ENCODE measurements at regions of chr1 and their contacts with region 1.

Region 1: DNA sequence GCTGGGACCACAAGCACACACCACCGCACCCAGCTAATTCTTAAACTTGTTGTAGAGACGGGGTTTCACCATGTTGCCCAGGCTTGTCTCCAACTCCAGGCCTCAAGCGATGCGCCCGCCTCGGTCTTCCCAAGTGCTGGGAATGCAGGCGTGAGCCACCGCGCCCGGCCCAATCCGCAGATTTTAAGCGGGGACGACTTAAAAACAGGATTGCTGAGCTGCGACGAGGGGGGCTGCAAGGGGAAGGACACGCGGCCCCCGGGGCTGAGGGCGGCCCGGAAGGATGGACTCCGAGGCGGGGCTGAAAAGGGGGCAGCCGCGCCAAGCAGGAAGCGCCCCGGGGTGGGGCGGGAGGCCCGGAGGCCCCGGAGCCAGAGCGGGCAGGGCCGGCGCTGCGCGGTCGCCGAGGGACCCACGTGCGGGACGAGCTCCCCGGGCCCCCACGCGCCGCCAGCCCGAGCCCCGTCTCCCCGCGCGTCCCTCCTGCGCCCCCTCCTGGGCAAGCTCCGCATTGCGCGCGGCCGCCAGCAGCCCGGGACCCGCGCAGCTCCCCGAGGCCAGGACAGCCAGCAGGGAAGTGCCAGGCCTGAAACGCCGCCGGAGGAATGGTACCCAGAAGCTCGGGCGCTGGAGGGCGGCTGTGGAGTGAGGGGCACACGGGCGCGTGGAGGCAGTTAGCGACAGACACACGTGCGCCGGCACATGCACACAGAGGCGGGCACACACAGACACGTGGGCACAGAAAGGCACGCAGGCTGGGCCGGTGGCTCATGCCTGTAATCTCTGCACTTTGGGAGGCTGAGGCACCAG is 5.5 kb upstream of the PRKCZ start:
- DNase-seq: peak; percentile 85
- CTCF ChIP-seq: peak; percentile 91

Region 2: DNA sequence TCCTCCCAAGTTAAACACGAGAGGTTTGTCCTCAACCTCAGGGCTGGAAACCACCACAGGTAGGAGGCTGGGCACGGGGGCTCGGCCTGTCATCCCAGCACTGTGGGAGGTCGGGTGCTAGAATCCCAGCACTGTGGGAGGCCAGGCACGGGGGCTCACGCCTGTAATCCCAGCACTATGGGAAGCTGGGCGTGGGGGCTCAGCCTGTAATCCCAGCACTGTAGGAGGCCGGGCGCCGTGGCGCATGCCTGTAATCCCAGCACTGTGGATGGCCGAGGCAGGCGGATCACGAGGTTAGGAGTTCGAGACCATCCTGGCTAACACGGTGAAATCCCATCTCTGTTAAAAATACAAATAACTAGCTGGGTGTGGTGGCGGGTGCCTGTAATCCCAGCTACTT is 313.8 kb before region 1 on chr1:
- CTCF ChIA-PET with region 1: no interaction called
- POLR2A ChIA-PET with region 1: no interaction called
- DNase-seq: no peak
- CTCF ChIP-seq: no peak

Region 3: GRCh38 chr1:1959840-1960479 is 84.8 kb before region 1 on chr1:
- CTCF ChIA-PET with region 1: interaction called, 12 read pairs
- POLR2A ChIA-PET with region 1: no interaction called
- DNase-seq: peak; percentile 84
- CTCF ChIP-seq: peak; percentile 79

Region 4: GRCh38 chr1:1989102-1989542 is 55.6 kb before region 1 on chr1:
- CTCF ChIA-PET with region 1: no interaction called
- POLR2A ChIA-PET with region 1: no interaction called
- DNase-seq: no peak
- CTCF ChIP-seq: no peak

Region 5: GRCh38 chr1:2019571-2020309 is 25.0 kb before region 1 on chr1:
- CTCF ChIA-PET with region 1: interaction called, 10 read pairs
- POLR2A ChIA-PET with region 1: no interaction called
- DNase-seq: no peak
- CTCF ChIP-seq: no peak

Region 6: DNA sequence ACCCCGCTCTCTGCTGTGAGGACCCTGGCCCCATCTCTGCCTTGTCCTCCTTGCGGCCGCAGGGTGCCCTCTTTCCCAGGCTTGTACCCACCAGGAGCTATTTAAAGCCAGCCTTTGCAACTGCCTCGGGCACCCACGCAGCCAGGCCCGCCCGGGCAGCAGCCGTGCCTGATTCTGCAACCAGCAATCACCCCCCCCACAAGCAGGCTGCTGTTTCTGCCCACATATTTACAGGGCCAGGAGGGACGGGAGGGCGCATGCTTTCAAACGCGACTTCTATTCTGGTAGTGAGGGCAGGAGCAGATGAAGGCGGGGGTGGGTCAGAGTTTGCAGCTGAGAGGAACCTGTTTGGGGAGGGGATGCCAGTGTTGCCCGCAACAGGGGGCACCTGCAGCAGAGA is 12.0 kb before region 1 on chr1:
- CTCF ChIA-PET with region 1: interaction called, 17 read pairs
- POLR2A ChIA-PET with region 1: no interaction called
- DNase-seq: no peak
- CTCF ChIP-seq: no peak

Region 7: GRCh38 chr1:2055911-2056575 is 11.3 kb after region 1 on chr1:
- CTCF ChIA-PET with region 1: interaction called, 28 read pairs
- POLR2A ChIA-PET with region 1: interaction called, 5 read pairs
- DNase-seq: no peak
- CTCF ChIP-seq: no peak

Region 8: DNA sequence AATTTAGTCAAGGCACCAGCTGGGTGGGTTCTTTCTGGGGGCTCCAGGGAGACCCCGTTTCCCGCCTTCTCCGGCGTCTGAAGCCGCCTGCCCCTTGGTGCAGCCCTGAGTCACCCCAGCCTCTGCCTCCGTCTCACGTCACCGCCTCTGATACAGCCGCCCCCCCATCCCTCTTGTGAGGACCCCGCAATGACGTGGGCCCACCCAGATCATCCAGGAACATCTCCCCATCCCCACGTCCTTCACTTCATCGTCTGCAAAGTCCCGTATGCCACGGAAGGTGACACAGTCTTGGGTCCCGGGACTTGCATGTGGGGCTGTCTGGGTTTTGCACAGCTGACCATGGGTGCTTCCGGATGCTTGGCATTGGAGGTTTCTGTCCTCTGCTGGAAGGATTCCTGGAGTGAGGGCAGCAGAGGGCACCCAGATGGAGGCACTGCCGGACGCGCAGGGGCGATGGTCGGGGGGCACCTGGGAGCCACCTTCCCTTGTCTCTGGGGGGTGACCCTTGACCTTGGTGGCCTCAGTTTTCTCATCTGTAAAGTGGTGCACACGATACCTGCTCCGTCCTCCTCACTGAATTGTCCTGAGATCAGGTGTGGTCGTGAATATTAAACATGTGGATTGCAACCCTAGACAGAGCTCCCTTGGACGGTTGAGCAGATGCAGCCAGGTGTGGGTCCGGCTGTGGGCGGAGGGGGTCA is 64.3 kb after region 1 on chr1:
- CTCF ChIA-PET with region 1: no interaction called
- POLR2A ChIA-PET with region 1: no interaction called
- DNase-seq: no peak
- CTCF ChIP-seq: no peak

Region 9: GRCh38 chr1:2133039-2133878 is 88.5 kb after region 1 on chr1:
- CTCF ChIA-PET with region 1: no interaction called
- POLR2A ChIA-PET with region 1: no interaction called
- DNase-seq: peak; percentile 95
- CTCF ChIP-seq: no peak

Measured in GM10248 (cell line).